ENCODE measurements at regions of chr2 and their contacts with region 1.

Region 1: DNA sequence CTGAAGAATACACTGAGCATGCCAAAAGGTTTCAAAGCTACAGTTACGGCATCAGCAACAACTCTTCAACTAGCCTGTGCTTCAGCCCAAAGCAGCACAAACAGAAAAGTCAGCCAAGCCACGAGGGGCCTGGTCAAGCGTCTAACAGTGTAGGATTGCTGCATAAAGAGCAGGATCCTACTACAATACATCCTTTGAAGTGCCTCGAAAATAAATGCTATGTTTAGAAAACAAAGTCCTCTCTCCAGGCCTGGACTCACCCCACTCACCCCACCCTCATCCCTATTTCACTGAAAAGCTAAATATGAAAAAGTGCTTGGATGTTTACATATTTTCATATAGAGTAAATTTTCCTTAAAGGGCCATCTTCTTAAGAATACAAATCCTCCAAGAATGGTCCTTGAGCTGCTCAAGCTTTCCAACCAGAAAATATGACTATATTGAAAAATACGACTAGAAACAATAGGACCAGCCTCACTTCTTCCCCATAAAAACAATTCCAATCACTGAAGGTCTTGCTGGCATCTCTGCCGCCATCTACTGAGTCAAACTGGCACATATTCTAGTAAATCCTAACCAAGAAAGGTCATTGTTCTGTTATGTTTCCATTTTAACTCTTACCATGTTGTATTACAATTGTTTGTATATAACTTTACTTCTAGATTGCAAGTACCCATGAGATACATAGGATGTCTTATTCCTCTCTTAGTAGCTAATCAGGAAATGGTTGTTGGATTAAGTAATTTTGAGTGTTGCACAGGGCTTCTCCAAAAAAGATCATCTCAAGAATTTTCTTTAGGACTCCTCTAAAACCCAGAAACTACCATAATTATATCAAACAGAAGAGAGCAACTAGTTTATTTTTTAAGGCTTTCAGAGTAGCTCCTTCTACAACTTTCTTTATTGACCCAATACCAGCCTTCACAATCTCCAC is 63.6 kb downstream of the CLHC1 start:
- DNase-seq: peak in 2 of 6 donors; percentile 36 to 53
- ATAC-seq: peak; percentile 54 to 79 (median 75)
- H3K4me3 ChIP-seq: no peak overlapping the region
- H3K27ac ChIP-seq: peak overlapping the region in 3 of 4 donors; percentile 0 to 51 (median 43)
- H3K4me1 ChIP-seq: peaks cover 31 to 39% (median 35%) of the 10 kb centered on the region in 3 donors
- H3K27me3 ChIP-seq: no peaks in the 10 kb centered on the region
- CTCF ChIP-seq: peak; percentile 25 to 71 (median 60)

Region 2: GRCh38 chr2:54899576-54900200 is 268.8 kb before region 1 on chr2:
- intact Hi-C with region 1: loop called in 1 of 3 experiments (anchors 10 kb)
- DNase-seq: peak in 2 of 6 donors; percentile 19 to 34
- ATAC-seq: peak; percentile 73 to 90 (median 88)
- H3K4me3 ChIP-seq: no peak overlapping the region
- H3K27ac ChIP-seq: no peak overlapping the region
- H3K4me1 ChIP-seq: no peaks in the 10 kb centered on the region
- H3K27me3 ChIP-seq: no peaks in the 10 kb centered on the region
- CTCF ChIP-seq: peak in 3 of 4 donors; percentile 38 to 51 (median 41)

Region 3: GRCh38 chr2:55014962-55015939 is 153.2 kb before region 1 on chr2:
- intact Hi-C with region 1: loop called in 1 of 3 experiments (anchors 5 kb)
- DNase-seq: peak in 4 of 6 donors; percentile 25 to 71 (median 70)
- ATAC-seq: peak; percentile 75 to 85 (median 80)
- H3K4me3 ChIP-seq: no peak overlapping the region
- H3K27ac ChIP-seq: peak overlapping the region in 1 of 4 donors; percentile 6
- H3K4me1 ChIP-seq: peaks cover 38 to 56% (median 53%) of the 10 kb centered on the region in 3 donors
- H3K27me3 ChIP-seq: no peaks in the 10 kb centered on the region
- CTCF ChIP-seq: peak; percentile 10 to 51 (median 44)

Region 4: DNA sequence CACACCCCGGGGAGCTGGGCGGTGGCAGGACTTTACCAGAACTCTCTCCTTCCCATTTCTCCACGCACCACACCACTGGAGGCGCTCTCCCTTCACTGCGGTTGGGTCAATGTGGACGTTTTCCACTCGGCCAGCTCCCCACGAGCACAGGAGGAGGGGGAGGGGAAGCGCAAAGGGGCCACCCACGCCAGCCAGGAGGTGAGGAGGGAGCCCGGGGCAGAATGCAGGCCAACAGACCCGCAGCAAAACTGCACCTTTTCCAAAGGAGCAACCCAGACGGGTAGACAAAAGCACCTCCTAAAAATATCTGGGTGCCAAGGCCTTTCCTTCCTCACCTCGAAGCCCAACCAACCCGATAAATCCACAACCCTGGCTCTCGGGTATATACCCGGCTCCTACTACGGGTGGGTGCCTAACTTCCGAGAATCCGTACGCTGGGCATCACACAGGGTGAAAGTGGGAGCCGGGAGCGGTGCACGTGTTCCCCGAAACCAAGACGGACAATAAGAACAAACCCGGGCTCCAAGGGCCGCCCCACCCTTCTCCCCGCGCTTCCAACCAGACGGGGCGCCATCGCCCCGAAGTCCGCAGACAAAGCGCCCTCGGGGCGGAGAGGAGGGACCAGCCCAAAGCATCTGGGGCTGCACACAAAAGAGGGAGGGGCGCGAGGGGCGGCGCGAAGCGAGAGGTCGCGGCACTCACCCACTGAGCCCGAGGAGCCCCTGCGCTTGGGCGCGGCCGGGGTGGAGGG is 119.3 kb before region 1 on chr2:
- intact Hi-C with region 1: loop called in 1 of 3 experiments (anchors 10 kb)
- DNase-seq: peak; percentile 82 to 90 (median 86)
- ATAC-seq: peak; percentile 51 to 75 (median 69)
- H3K4me3 ChIP-seq: peak overlapping the region; percentile 89 to 96 (median 93)
- H3K27ac ChIP-seq: peak overlapping the region; percentile 87 to 98 (median 93)
- H3K4me1 ChIP-seq: peaks cover 16 to 46% (median 45%) of the 10 kb centered on the region in 3 donors
- H3K27me3 ChIP-seq: no peaks in the 10 kb centered on the region
- CTCF ChIP-seq: peak; percentile 19 to 47 (median 34)

Region 5: GRCh38 chr2:55590810-55591440 is 422.4 kb after region 1 on chr2:
- intact Hi-C with region 1: no loop called
- DNase-seq: no peak
- ATAC-seq: peak in 2 of 4 donors; percentile 24 to 46
- H3K4me3 ChIP-seq: no peak overlapping the region
- H3K27ac ChIP-seq: no peak overlapping the region
- H3K4me1 ChIP-seq: peaks cover 0 to 3% (median 0%) of the 10 kb centered on the region in 3 donors
- H3K27me3 ChIP-seq: no peaks in the 10 kb centered on the region
- CTCF ChIP-seq: no peak

Region 6: DNA sequence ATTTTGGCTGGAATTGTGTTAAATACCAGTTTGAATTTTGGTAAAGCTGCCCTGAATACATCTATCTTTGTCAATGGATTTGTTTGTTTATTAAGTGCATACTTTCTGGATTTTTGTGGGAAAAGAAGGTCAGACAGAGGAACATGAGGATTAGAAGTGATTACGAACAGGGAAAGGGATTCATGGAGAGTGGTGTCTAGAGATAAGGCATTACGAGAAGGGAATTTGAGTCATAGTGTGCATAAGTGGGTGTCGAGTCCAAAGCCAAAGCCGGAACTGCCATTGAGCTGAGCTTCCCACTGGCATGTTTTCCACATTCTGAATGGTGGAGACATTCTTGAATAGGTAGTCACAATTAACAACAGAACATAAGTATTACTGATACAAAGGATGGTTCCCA is 824.0 kb after region 1 on chr2:
- intact Hi-C with region 1: no loop called
- DNase-seq: no peak
- ATAC-seq: peak in 3 of 4 donors; percentile 64 to 71 (median 68)
- H3K4me3 ChIP-seq: no peak overlapping the region
- H3K27ac ChIP-seq: no peak overlapping the region
- H3K4me1 ChIP-seq: peaks cover 0 to 4% (median 1%) of the 10 kb centered on the region in 3 donors
- H3K27me3 ChIP-seq: no peaks in the 10 kb centered on the region
- CTCF ChIP-seq: no peak

Measured in pancreas (tissue), 10 donors.